GM12878 (cell line): ENCODE measurements at regions of chr13 and their contacts with region 1.

Region 1: GRCh38 chr13:46544208-46544607 is 8.8 kb upstream of the LRCH1 start:
- DNase-seq: peak; percentile 51
- ATAC-seq: peak; percentile 94
- H3K4me3 ChIP-seq: no peak overlapping the region
- H3K27ac ChIP-seq: no peak overlapping the region
- H3K4me1 ChIP-seq: peaks cover 15% of the 10 kb centered on the region
- H3K27me3 ChIP-seq: no peaks in the 10 kb centered on the region
- CTCF ChIP-seq: no peak
- EP300 ChIP-seq: no peak
- POLR2A ChIP-seq: no peak
- RAD21 ChIP-seq: no peak

Region 2: GRCh38 chr13:46382224-46382623 is 162.0 kb before region 1 on chr13:
- CTCF ChIA-PET with region 1: no interaction called
- POLR2A ChIA-PET with region 1: no interaction called
- RAD21 ChIA-PET with region 1: no interaction called
- SMC1A ChIA-PET with region 1: no interaction called
- in situ Hi-C with region 1: no loop called
- intact Hi-C with region 1: no loop called
- DNase-seq: no peak
- ATAC-seq: peak; percentile 40
- H3K4me3 ChIP-seq: peak overlapping the region; percentile 37
- H3K27ac ChIP-seq: peak overlapping the region; percentile 85
- H3K4me1 ChIP-seq: peaks cover 48% of the 10 kb centered on the region
- H3K27me3 ChIP-seq: no peaks in the 10 kb centered on the region
- CTCF ChIP-seq: no peak
- EP300 ChIP-seq: peak in 1 of 2 experiments; percentile 48; a peak in 2 of 4 replicates
- POLR2A ChIP-seq: no peak
- RAD21 ChIP-seq: no peak

Region 3: DNA sequence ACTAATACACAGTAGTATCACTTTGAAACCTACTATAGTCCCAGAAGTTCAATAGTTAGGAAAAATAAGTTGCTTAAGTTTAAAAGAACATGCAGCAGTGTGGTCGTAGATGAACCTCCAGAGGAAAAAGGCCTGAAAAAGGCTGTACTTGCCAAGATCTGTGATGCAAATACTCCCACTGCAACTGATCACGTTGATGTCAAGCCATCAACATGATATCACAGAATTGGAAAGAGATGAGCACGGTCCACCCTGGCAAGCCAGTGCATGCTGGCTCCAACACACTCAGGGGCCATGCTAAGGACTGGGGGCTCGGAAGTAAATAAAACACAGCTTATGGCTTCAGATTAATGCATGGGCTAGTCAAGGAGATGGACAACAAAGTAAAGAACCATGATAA is 63.0 kb before region 1 on chr13:
- CTCF ChIA-PET with region 1: no interaction called
- POLR2A ChIA-PET with region 1: no interaction called
- RAD21 ChIA-PET with region 1: no interaction called
- SMC1A ChIA-PET with region 1: no interaction called
- in situ Hi-C with region 1: no loop called
- intact Hi-C with region 1: no loop called
- DNase-seq: no peak
- ATAC-seq: no peak
- H3K4me3 ChIP-seq: no peak overlapping the region
- H3K27ac ChIP-seq: no peak overlapping the region
- H3K4me1 ChIP-seq: no peaks in the 10 kb centered on the region
- H3K27me3 ChIP-seq: no peaks in the 10 kb centered on the region
- CTCF ChIP-seq: no peak
- EP300 ChIP-seq: no peak
- POLR2A ChIP-seq: no peak
- RAD21 ChIP-seq: no peak

Region 4: GRCh38 chr13:46530084-46530935 is 13.9 kb before region 1 on chr13:
- CTCF ChIA-PET with region 1: no interaction called
- POLR2A ChIA-PET with region 1: interaction called, 7 read pairs
- RAD21 ChIA-PET with region 1: interaction called, 3 read pairs
- SMC1A ChIA-PET with region 1: interaction called, 11 read pairs
- in situ Hi-C with region 1: no loop called
- intact Hi-C with region 1: no loop called
- DNase-seq: no peak
- ATAC-seq: no peak
- H3K4me3 ChIP-seq: no peak overlapping the region
- H3K27ac ChIP-seq: no peak overlapping the region
- H3K4me1 ChIP-seq: peaks cover 7% of the 10 kb centered on the region; the same call in 1 of the 2 replicates
- H3K27me3 ChIP-seq: no peaks in the 10 kb centered on the region
- CTCF ChIP-seq: no peak
- EP300 ChIP-seq: no peak
- POLR2A ChIP-seq: no peak
- RAD21 ChIP-seq: no peak